ENCODE measurements at regions of chrX and their contacts with region 1.

Region 1: DNA sequence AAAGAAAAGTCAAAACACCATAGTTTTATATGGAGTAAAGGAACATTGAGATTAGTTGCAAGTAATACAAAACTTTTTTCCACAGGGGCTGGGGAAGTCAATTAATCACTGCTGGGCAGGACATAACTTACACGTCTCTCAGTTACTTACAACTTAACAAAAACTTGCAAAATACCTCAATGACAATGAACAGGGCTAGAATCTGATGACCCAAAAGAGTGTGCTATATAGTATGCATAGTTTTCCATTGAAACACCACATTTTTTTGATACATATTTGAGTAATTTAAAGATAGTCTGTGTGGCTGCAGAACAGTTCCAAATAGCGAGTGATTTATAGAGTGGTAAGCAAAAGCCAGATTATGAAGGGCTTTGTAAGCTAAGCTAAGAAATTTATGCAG is 172.3 kb upstream of the TRPC5 start:
- DNase-seq: no peak
- H3K4me3 ChIP-seq: no peak overlapping the region
- H3K27ac ChIP-seq: no peak overlapping the region
- H3K4me1 ChIP-seq: no peaks in the 10 kb centered on the region
- H3K27me3 ChIP-seq: no peaks in the 10 kb centered on the region
- CTCF ChIP-seq: no peak

Region 2: DNA sequence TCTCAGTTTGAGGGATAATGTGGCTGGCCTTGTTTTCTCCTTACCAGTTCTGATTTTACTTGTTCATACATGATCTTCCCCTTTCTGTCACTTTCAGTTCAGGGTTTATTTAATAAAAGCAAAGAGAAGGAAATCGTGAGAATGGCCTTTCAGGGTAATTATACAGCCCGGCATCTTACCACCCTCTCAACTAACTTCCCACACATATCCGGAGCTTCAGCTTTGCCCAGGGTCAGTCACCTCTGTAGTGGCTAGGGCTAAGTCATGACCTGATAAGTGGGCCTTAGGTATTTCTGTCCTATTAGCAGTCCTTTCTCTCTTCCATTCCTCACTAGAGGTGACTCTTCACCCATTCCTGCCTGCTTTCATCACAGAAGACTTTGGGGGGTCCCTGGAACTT is 188.1 kb before region 1 on chrX:
- intact Hi-C with region 1: no loop called
- DNase-seq: no peak
- H3K4me3 ChIP-seq: no peak overlapping the region
- H3K27ac ChIP-seq: no peak overlapping the region
- H3K4me1 ChIP-seq: no peaks in the 10 kb centered on the region
- H3K27me3 ChIP-seq: no peaks in the 10 kb centered on the region
- CTCF ChIP-seq: no peak

Region 3: GRCh38 chrX:112279940-112280339 is 25.0 kb after region 1 on chrX:
- intact Hi-C with region 1: loop called (anchors 2 kb)
- DNase-seq: no peak
- H3K4me3 ChIP-seq: no peak overlapping the region
- H3K27ac ChIP-seq: no peak overlapping the region
- H3K4me1 ChIP-seq: no peaks in the 10 kb centered on the region
- H3K27me3 ChIP-seq: no peaks in the 10 kb centered on the region
- CTCF ChIP-seq: no peak